ENCODE measurements at regions of chr9 and their contacts with region 1.

Region 1: GRCh38 chr9:131739980-131740648 is at the start of gene RAPGEF1:
- DNase-seq: no peak
- H3K4me3 ChIP-seq: peak within 1 kb of the TSS; percentile 62 to 82 (median 68)
- H3K27ac ChIP-seq: peak within 1 kb of the TSS; percentile 86 to 98 (median 94)
- H3K4me1 ChIP-seq: peaks cover 24 to 45% (median 33%) of the 10 kb centered on the region in 3 donors
- H3K27me3 ChIP-seq: no peaks in the 10 kb centered on the region
- CTCF ChIP-seq: peak; percentile 72 to 99 (median 96)
- POLR2A ChIP-seq: no peak
- total RNA-seq, gene RAPGEF1: 12.2 to 40.4 (median 19.0) TPM

Region 2: GRCh38 chr9:131349881-131350563 is 390.1 kb before region 1 on chr9:
- intact Hi-C with region 1: loop called (anchors 10 kb)
- DNase-seq: peak; percentile 34
- H3K4me3 ChIP-seq: peak overlapping the region in 2 of 4 donors; percentile 11 to 50
- H3K27ac ChIP-seq: no peak overlapping the region
- H3K4me1 ChIP-seq: peaks cover 4 to 12% (median 7%) of the 10 kb centered on the region in 3 donors
- H3K27me3 ChIP-seq: peaks cover 0 to 21% (median 0%) of the 10 kb centered on the region in 4 donors
- CTCF ChIP-seq: peak; percentile 78 to 88 (median 86)
- POLR2A ChIP-seq: no peak

Region 3: GRCh38 chr9:131523451-131524435 is 216.4 kb before region 1 on chr9:
- intact Hi-C with region 1: loop called (anchors 10 kb)
- DNase-seq: no peak
- H3K4me3 ChIP-seq: no peak overlapping the region
- H3K27ac ChIP-seq: no peak overlapping the region
- H3K4me1 ChIP-seq: no peaks in the 10 kb centered on the region
- H3K27me3 ChIP-seq: no peaks in the 10 kb centered on the region
- CTCF ChIP-seq: no peak
- POLR2A ChIP-seq: no peak

Region 4: GRCh38 chr9:131590908-131591844 is 148.9 kb before region 1 on chr9:
- intact Hi-C with region 1: loop called (anchors 2 kb)
- DNase-seq: peak; percentile 38
- H3K4me3 ChIP-seq: no peak overlapping the region
- H3K27ac ChIP-seq: peak overlapping the region in 1 of 4 donors; percentile 6
- H3K4me1 ChIP-seq: peaks cover 0 to 17% (median 0%) of the 10 kb centered on the region in 3 donors
- H3K27me3 ChIP-seq: no peaks in the 10 kb centered on the region
- CTCF ChIP-seq: peak; percentile 62 to 92 (median 89)
- POLR2A ChIP-seq: no peak

Region 5: DNA sequence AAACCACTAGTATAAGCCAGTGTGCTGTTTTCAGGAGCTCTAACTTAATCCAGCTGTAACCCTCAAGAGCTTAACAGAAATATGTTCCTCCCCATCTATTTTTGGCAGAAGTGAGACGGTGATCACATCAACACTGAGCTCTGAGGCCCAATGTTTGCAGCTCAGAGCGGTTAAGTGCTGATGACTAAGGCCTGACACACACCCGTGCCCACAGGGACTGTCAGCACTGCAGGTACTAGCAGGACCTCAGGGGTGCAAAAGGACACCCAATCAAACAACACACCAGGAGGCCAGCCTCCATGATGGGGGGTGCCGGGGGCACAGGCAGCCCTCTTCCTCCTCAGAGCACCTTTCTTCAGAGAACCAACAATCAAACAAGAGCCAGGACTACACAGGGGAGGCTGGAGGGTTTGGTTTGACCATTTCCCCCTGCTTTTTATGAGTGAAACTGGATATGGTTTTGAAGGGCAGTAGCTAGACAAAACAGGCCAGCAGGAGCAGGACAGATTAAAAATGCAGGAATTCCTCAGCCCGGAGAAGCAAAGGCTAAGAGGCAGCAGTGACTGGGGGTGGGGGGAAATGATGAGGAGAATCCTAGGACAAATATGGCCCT is 61.5 kb before region 1 on chr9:
- intact Hi-C with region 1: loop called (anchors 10 kb)
- DNase-seq: no peak
- H3K4me3 ChIP-seq: no peak overlapping the region
- H3K27ac ChIP-seq: peak overlapping the region; percentile 64 to 90 (median 86)
- H3K4me1 ChIP-seq: peaks cover 40 to 77% (median 50%) of the 10 kb centered on the region in 3 donors
- H3K27me3 ChIP-seq: peaks cover 0 to 13% (median 0%) of the 10 kb centered on the region in 4 donors
- CTCF ChIP-seq: peak in 2 of 6 experiments; percentile 9 to 24
- POLR2A ChIP-seq: peak in 2 of 4 donors; percentile 40 to 76

Region 6: GRCh38 chr9:131697097-131697496 is 43.0 kb before region 1 on chr9:
- intact Hi-C with region 1: no loop called
- DNase-seq: no peak
- H3K4me3 ChIP-seq: no peak overlapping the region
- H3K27ac ChIP-seq: peak overlapping the region in 2 of 4 donors; percentile 40 to 52
- H3K4me1 ChIP-seq: peaks cover 11 to 75% (median 23%) of the 10 kb centered on the region in 3 donors
- H3K27me3 ChIP-seq: no peaks in the 10 kb centered on the region
- CTCF ChIP-seq: no peak
- POLR2A ChIP-seq: no peak

Measured in esophagus squamous epithelium (tissue), 5 donors.